ENCODE measurements at regions of chr3 and their contacts with region 1.

Region 1: GRCh38 chr3:178084938-178085816 is 451.1 kb upstream of the KCNMB2 start:
- DNase-seq: peak; percentile 88
- H3K4me3 ChIP-seq: no peak overlapping the region
- H3K27ac ChIP-seq: peak overlapping the region; percentile 61
- H3K4me1 ChIP-seq: peaks cover 37% of the 10 kb centered on the region
- H3K27me3 ChIP-seq: no peaks in the 10 kb centered on the region
- CTCF ChIP-seq: no peak

Region 2: GRCh38 chr3:177810162-177810623 is 275.0 kb before region 1 on chr3:
- CTCF ChIA-PET with region 1: interaction called, 14 read pairs
- POLR2A ChIA-PET with region 1: no interaction called
- intact Hi-C with region 1: no loop called
- DNase-seq: no peak
- H3K4me3 ChIP-seq: no peak overlapping the region
- H3K27ac ChIP-seq: no peak overlapping the region
- H3K4me1 ChIP-seq: peaks cover 1% of the 10 kb centered on the region
- H3K27me3 ChIP-seq: no peaks in the 10 kb centered on the region
- CTCF ChIP-seq: no peak

Region 3: GRCh38 chr3:178170698-178171535 is 85.7 kb after region 1 on chr3:
- CTCF ChIA-PET with region 1: interaction called, 18 read pairs
- POLR2A ChIA-PET with region 1: no interaction called
- intact Hi-C with region 1: no loop called
- DNase-seq: peak; percentile 98
- H3K4me3 ChIP-seq: no peak overlapping the region
- H3K27ac ChIP-seq: peak overlapping the region; percentile 60
- H3K4me1 ChIP-seq: peaks cover 25% of the 10 kb centered on the region
- H3K27me3 ChIP-seq: no peaks in the 10 kb centered on the region
- CTCF ChIP-seq: no peak

Region 4: DNA sequence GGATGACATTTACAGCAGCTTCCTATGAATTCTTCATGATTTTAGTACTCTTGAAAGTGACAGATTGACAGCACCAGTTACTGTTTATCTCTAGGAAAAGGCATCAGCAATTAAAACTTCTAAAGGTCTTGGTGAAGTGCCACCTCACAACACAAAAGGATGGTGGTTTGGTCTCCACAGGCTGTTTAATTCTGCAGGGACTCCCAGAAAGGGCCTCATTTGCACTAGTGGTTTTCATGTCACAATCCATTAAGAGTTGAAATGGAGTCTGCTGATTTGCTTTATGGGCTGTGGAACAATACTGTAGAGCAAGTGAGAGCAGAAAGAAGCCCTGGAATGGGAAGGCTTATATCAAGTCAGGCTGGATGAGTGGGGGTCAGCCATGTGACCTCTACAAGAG is 225.8 kb after region 1 on chr3:
- CTCF ChIA-PET with region 1: no interaction called
- POLR2A ChIA-PET with region 1: no interaction called
- intact Hi-C with region 1: no loop called
- DNase-seq: peak; percentile 32
- H3K4me3 ChIP-seq: no peak overlapping the region
- H3K27ac ChIP-seq: no peak overlapping the region
- H3K4me1 ChIP-seq: no peaks in the 10 kb centered on the region
- H3K27me3 ChIP-seq: no peaks in the 10 kb centered on the region
- CTCF ChIP-seq: no peak

Region 5: GRCh38 chr3:178325330-178325729 is 240.2 kb after region 1 on chr3:
- CTCF ChIA-PET with region 1: no interaction called
- POLR2A ChIA-PET with region 1: no interaction called
- intact Hi-C with region 1: loop called (anchors 10 kb)
- DNase-seq: peak; percentile 69
- H3K4me3 ChIP-seq: no peak overlapping the region
- H3K27ac ChIP-seq: no peak overlapping the region
- H3K4me1 ChIP-seq: peaks cover 26% of the 10 kb centered on the region
- H3K27me3 ChIP-seq: no peaks in the 10 kb centered on the region
- CTCF ChIP-seq: peak; percentile 65